Calu3 (cell line): ENCODE measurements at regions of chr1 and their contacts with region 1.

Region 1: DNA sequence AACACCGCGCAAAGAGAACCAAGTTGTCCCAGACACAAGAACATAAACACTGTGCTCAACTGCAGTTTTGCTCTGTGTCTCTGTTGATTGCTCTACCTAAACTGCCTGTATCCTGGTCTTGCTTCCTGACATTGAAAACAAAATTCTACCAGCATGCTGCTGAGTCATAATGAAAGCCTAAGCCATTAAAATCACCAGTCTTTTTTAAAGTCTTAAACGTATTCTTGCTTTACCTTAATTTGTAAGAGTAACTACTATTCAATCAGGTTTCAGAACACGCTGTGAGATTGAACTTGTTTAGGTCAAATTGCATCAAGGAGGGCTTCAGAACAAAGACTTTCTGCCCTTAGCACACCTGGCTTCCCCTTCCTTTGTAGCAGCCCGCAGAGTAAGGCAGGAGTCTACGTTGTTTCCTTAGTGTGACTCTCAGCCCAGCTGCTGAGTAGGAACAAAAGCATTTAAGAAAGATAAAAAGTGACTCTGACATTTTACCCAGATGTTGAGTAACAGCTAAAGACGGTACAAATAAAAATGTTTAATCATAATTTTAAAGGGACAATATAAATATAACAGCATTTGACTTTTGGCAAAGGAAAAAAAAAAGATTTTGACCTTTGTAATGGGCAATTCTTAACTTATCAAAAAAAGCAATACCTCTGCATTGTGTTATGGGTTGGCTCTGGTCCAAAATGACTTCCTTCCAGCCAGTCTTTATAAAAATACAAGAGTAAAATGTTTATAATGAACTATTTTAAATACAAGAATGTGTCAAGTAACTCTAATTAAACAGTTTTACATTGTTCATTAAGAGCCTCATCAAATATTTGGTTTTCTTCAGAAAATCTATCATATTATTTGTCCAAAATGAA is 186.9 kb upstream of the ADGRL4 start:
- DNase-seq: peak; percentile 28
- H3K4me3 Mint-ChIP-seq: peak overlapping the region; percentile 10
- H3K27ac Mint-ChIP-seq: peak overlapping the region; percentile 95
- H3K4me1 Mint-ChIP-seq: peaks cover 37% of the 10 kb centered on the region
- H3K27me3 Mint-ChIP-seq: no peaks in the 10 kb centered on the region
- CTCF ChIP-seq: no peak

Region 2: GRCh38 chr1:78688701-78689100 is 504.7 kb before region 1 on chr1:
- CTCF ChIA-PET with region 1: no interaction called
- intact Hi-C with region 1: loop called (anchors 1 kb)
- DNase-seq: no peak
- H3K4me3 Mint-ChIP-seq: no peak overlapping the region
- H3K27ac Mint-ChIP-seq: no peak overlapping the region
- H3K4me1 Mint-ChIP-seq: peaks cover 10% of the 10 kb centered on the region
- H3K27me3 Mint-ChIP-seq: no peaks in the 10 kb centered on the region
- CTCF ChIP-seq: no peak

Region 3: DNA sequence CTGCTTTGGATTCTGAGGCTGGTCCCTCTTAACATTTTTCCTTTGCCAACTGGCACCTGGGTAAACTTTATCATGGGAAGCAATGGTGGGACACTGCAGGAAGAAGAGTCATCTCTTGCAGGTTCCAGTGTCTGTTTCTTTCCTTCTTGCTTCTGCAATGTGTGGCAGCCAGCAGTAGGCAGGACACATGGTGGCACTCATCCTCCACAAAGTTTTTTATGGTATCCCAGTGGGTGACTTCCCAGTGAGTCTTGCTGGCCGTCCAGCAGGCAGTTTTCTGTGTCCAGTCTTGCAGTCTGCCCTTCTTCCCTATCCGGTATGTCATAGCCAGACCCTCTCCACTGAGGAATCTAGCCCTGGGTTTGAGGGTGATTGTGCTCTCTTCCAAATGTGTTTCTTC is 138.3 kb after region 1 on chr1:
- CTCF ChIA-PET with region 1: no interaction called
- intact Hi-C with region 1: no loop called
- DNase-seq: no peak
- H3K4me3 Mint-ChIP-seq: no peak overlapping the region
- H3K27ac Mint-ChIP-seq: no peak overlapping the region
- H3K4me1 Mint-ChIP-seq: no peaks in the 10 kb centered on the region
- H3K27me3 Mint-ChIP-seq: no peaks in the 10 kb centered on the region
- CTCF ChIP-seq: no peak

Region 4: GRCh38 chr1:79524126-79524525 is 330.7 kb after region 1 on chr1:
- CTCF ChIA-PET with region 1: no interaction called
- intact Hi-C with region 1: no loop called
- DNase-seq: no peak
- H3K4me3 Mint-ChIP-seq: no peak overlapping the region
- H3K27ac Mint-ChIP-seq: no peak overlapping the region
- H3K4me1 Mint-ChIP-seq: no peaks in the 10 kb centered on the region
- H3K27me3 Mint-ChIP-seq: no peaks in the 10 kb centered on the region
- CTCF ChIP-seq: no peak